Activated CD4-positive, alpha-beta T cell treated with anti-CD3 and anti-CD28 coated beads for 36 hours (primary cell): ENCODE measurements at regions of chr3 and their contacts with region 1.

Region 1: GRCh38 chr3:197590313-197590962 is 34.7 kb upstream of the BDH1 start:
- DNase-seq: no peak
- ATAC-seq: no peak
- H3K4me3 Mint-ChIP-seq: no peak overlapping the region
- H3K27ac Mint-ChIP-seq: no peak overlapping the region
- H3K4me1 Mint-ChIP-seq: peaks cover 4% of the 10 kb centered on the region
- H3K27me3 Mint-ChIP-seq: no peaks in the 10 kb centered on the region

Region 2: DNA sequence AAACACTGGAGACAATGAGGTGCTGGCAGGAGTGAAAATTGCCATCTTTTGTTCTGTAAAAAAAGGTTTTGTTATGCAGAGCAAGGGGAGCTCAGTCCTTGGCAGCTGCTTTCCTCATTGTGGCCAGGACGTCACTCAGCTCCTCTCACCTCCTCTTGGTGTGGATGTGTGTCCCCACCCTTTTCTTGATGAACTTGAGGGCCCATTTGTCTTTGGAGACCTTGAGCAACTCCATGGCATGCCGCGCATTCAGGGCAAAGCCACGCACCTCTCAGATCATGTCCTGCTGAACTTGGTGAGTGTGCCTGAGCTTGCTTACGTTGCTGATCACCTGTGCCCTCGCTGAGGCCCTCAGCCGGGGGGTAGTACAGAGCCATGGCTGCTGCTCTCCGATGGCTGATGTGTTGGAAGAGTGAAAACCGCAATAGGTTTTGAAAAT is 10.2 kb before region 1 on chr3:
- CTCF ChIA-PET with region 1: no interaction called
- POLR2A ChIA-PET with region 1: no interaction called
- intact Hi-C with region 1: loop called (anchors 1 kb)
- DNase-seq: no peak
- ATAC-seq: no peak
- H3K4me3 Mint-ChIP-seq: no peak overlapping the region
- H3K27ac Mint-ChIP-seq: no peak overlapping the region
- H3K4me1 Mint-ChIP-seq: no peaks in the 10 kb centered on the region
- H3K27me3 Mint-ChIP-seq: no peaks in the 10 kb centered on the region

Region 3: DNA sequence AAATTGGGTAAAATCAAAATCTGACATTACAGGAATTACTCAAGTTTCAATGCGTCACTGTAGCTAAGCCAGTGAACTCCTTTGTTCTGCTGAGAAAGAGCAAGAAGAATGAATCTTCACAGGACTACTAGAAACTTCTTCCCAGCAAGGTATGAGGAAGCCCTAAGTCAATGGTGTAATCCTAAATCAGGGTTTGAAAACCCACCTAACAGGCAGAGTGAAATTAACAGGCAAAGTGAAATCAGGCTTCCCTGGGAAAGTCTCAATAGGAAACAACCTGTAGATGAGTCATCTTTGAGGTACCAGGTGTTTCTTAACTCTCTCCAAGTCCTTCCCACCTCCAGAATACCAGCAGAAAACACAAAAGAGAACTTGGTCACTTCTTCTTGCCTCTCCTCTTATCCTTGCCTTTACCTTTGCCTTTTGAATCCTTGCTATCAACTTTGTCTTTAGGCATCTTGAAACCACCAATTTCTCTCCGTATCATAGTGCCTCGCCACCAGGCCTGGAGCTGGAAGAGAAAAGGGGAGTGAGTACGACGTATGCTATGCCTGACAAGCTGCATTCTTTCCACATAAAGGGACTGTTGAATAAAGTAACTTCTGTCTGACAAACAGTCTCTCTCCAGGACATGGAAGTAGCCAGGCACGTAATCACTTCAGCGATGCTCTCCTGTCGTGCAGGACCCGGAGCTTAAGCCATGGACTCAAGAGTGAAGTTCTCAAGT is 298.9 kb after region 1 on chr3:
- CTCF ChIA-PET with region 1: no interaction called
- POLR2A ChIA-PET with region 1: no interaction called
- intact Hi-C with region 1: no loop called
- DNase-seq: no peak
- ATAC-seq: peak; percentile 91
- H3K4me3 Mint-ChIP-seq: no peak overlapping the region
- H3K27ac Mint-ChIP-seq: no peak overlapping the region
- H3K4me1 Mint-ChIP-seq: peaks cover 19% of the 10 kb centered on the region
- H3K27me3 Mint-ChIP-seq: no peaks in the 10 kb centered on the region